Naive thymus-derived CD4-positive, alpha-beta T cell (primary cell): ENCODE measurements at regions of chr17 and their contacts with region 1.

Region 1: DNA sequence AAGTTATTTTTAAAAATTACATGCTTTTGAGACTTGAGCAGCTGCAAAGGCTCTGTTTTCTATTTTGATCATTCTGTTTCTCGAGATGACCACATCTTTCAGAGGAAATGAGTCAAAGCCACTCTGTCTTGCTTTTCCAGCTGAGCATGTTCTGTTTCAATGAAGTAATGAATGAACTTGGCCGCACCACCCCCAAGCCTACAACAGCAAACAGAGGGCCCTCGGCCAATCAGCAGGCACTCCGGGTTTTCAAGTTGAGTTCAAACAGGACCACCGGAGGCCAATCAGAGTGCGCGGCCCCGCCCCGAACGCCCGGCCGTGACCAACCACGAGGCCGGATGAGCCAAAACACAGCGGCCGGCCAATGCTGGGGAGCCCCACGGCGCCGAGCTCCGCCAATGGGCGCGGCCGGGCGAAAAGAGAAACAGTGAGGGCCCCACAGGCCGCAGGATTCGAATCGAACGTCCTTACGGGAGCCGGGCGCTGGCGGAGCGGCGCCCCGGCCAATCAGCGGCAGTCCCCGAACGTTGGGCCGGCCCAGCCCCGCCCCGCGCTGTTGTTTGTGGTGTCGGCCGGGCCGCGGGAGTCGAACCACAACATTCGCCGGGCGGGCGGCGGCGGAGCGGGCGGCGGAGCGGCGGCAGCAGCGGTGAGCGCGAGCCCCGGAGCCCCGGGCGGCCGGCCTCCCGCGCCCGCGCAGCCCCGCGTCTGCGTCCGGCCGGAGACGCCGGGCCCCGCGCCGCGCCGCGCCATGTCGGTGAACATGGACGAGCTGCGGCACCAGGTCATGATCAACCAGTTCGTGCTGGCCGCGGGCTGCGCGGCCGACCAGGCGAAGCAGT is at the start of gene UBALD2:
- DNase-seq: peak; percentile 95 to 99 (median 98)
- ATAC-seq: peak; percentile 90
- H3K4me3 ChIP-seq: peak within 1 kb of the TSS; percentile 71
- H3K4me3 Mint-ChIP-seq: peak within 1 kb of the TSS; percentile 87 to 95 (median 92)
- H3K27ac ChIP-seq: peak within 1 kb of the TSS; percentile 92
- H3K27ac Mint-ChIP-seq: peak within 1 kb of the TSS; percentile 81 to 98 (median 94)
- H3K4me1 ChIP-seq: peaks cover 46 to 58% of the 10 kb centered on the region in 2 donors
- H3K4me1 Mint-ChIP-seq: peaks cover 47 to 70% (median 61%) of the 10 kb centered on the region in 7 donors
- H3K27me3 ChIP-seq: no peaks in the 10 kb centered on the region
- H3K27me3 Mint-ChIP-seq: peaks cover 0 to 3% (median 0%) of the 10 kb centered on the region in 5 donors
- total RNA-seq, gene UBALD2: 103 to 263 (median 241) TPM

Region 2: GRCh38 chr17:76121932-76122430 is 143.0 kb before region 1 on chr17:
- CTCF ChIA-PET with region 1: interaction called, 17 read pairs
- POLR2A ChIA-PET with region 1: interaction called, 12 read pairs
- intact Hi-C with region 1: no loop called
- DNase-seq: no peak
- ATAC-seq: peak; percentile 33
- H3K4me3 ChIP-seq: peak overlapping the region; percentile 63
- H3K4me3 Mint-ChIP-seq: peak overlapping the region in 7 of 10 donors; percentile 25 to 77 (median 53)
- H3K27ac ChIP-seq: peak overlapping the region; percentile 52
- H3K27ac Mint-ChIP-seq: peak overlapping the region; percentile 40 to 91 (median 73)
- H3K4me1 ChIP-seq: peaks cover 0 to 25% of the 10 kb centered on the region in 2 donors
- H3K4me1 Mint-ChIP-seq: peaks cover 10 to 39% (median 27%) of the 10 kb centered on the region in 7 donors
- H3K27me3 ChIP-seq: no peaks in the 10 kb centered on the region
- H3K27me3 Mint-ChIP-seq: no peaks in the 10 kb centered on the region

Region 3: DNA sequence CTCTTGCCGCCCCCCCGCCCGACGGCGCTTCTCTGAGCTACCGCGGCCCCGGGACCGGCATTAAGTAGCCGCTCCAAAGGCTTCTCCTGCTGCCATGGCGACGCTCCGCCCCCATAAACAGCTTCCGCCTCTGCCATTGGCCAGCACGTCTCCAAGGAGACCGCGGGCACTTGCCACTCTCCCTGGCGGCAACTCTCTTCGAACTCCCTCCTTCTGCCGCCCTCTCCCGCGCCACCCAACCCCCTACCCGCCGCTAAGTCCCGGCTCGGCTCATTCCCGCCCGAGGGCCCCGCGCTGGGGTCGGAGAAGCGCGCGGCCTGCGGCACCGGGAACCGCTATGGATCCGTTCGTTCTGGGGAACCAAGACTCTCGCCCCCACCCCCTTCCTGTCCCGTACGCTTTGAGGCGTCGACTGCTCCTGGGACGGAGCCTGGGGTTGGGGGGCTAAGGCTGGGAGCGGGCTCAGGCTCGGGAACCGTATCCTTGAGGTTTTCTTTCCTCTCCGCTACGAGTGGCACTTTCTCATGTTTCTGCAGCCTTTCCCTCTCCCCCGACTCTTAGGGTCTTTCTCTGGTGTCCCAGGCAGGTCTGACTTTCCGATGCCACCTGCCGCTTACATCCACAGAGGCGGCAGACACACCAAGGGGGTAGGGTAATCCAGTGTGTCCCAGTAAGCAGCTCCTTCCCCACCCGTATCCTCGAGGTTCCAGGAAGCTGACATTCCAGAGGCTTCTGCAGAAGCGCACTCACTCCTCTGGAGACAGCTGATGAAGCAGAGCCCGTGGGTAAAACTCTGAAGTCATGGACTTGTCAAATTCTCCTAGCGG is 123.6 kb before region 1 on chr17 and contains the start of gene FOXJ1:
- CTCF ChIA-PET with region 1: interaction called, 3 read pairs
- POLR2A ChIA-PET with region 1: interaction called, 23 read pairs
- intact Hi-C with region 1: loop called in 1 of 2 experiments (anchors 1 kb)
- DNase-seq: peak; percentile 88 to 94 (median 91)
- ATAC-seq: peak; percentile 87
- H3K4me3 ChIP-seq: peak within 1 kb of the TSS; percentile 49
- H3K4me3 Mint-ChIP-seq: peak within 1 kb of the TSS; percentile 82 to 89 (median 85)
- H3K27ac ChIP-seq: peak within 1 kb of the TSS; percentile 61
- H3K27ac Mint-ChIP-seq: peak within 1 kb of the TSS; percentile 80 to 99 (median 93)
- H3K4me1 ChIP-seq: peaks cover 50 to 58% of the 10 kb centered on the region in 2 donors
- H3K4me1 Mint-ChIP-seq: peaks cover 42 to 63% (median 59%) of the 10 kb centered on the region in 7 donors
- H3K27me3 ChIP-seq: no peaks in the 10 kb centered on the region
- H3K27me3 Mint-ChIP-seq: peaks cover 0 to 26% (median 0%) of the 10 kb centered on the region in 5 donors
- total RNA-seq, gene FOXJ1: 0.29 to 2.2 (median 1.4) TPM

Region 4: DNA sequence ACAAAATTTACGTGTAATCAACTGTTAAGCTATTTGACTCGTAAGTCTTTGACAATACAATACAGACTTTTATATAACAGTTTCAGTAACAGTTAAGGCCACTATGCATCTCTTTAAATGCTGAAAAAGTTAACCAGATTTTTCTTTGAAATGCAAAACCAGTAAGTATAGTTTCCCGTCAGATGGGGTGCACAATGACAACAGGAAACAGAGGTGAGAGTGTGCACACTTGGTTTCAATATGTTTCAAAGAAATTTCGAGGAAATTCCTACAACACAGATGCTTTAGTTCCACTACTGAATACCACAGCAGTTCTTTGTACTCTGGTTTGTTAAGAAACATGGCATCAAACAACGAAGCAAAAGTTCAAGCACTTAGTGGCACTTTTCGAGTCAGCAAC is 73.1 kb before region 1 on chr17:
- CTCF ChIA-PET with region 1: interaction called, 5 read pairs
- POLR2A ChIA-PET with region 1: interaction called, 214 read pairs
- intact Hi-C with region 1: loop called (anchors 1 kb)
- DNase-seq: peak in 7 of 9 donors; percentile 72 to 94 (median 89)
- ATAC-seq: peak; percentile 96
- H3K4me3 ChIP-seq: peak overlapping the region; percentile 42
- H3K4me3 Mint-ChIP-seq: peak overlapping the region; percentile 55 to 87 (median 73)
- H3K27ac ChIP-seq: peak overlapping the region; percentile 79
- H3K27ac Mint-ChIP-seq: peak overlapping the region; percentile 90 to 99 (median 96)
- H3K4me1 ChIP-seq: peaks cover 61 to 84% of the 10 kb centered on the region in 2 donors
- H3K4me1 Mint-ChIP-seq: peaks cover 46 to 87% (median 79%) of the 10 kb centered on the region in 7 donors
- H3K27me3 ChIP-seq: no peaks in the 10 kb centered on the region
- H3K27me3 Mint-ChIP-seq: no peaks in the 10 kb centered on the region

Region 5: GRCh38 chr17:76208120-76208519 is 56.9 kb before region 1 on chr17:
- CTCF ChIA-PET with region 1: no interaction called
- POLR2A ChIA-PET with region 1: interaction called, 10 read pairs
- intact Hi-C with region 1: no loop called
- DNase-seq: no peak
- ATAC-seq: no peak
- H3K4me3 ChIP-seq: no peak overlapping the region
- H3K4me3 Mint-ChIP-seq: peak overlapping the region in 6 of 10 donors; percentile 2 to 48 (median 16)
- H3K27ac ChIP-seq: peak overlapping the region; percentile 32
- H3K27ac Mint-ChIP-seq: peak overlapping the region in 7 of 9 donors; percentile 3 to 76 (median 70)
- H3K4me1 ChIP-seq: peaks cover 23 to 27% of the 10 kb centered on the region in 2 donors
- H3K4me1 Mint-ChIP-seq: peaks cover 19 to 70% (median 61%) of the 10 kb centered on the region in 7 donors
- H3K27me3 ChIP-seq: no peaks in the 10 kb centered on the region
- H3K27me3 Mint-ChIP-seq: no peaks in the 10 kb centered on the region

Region 6: DNA sequence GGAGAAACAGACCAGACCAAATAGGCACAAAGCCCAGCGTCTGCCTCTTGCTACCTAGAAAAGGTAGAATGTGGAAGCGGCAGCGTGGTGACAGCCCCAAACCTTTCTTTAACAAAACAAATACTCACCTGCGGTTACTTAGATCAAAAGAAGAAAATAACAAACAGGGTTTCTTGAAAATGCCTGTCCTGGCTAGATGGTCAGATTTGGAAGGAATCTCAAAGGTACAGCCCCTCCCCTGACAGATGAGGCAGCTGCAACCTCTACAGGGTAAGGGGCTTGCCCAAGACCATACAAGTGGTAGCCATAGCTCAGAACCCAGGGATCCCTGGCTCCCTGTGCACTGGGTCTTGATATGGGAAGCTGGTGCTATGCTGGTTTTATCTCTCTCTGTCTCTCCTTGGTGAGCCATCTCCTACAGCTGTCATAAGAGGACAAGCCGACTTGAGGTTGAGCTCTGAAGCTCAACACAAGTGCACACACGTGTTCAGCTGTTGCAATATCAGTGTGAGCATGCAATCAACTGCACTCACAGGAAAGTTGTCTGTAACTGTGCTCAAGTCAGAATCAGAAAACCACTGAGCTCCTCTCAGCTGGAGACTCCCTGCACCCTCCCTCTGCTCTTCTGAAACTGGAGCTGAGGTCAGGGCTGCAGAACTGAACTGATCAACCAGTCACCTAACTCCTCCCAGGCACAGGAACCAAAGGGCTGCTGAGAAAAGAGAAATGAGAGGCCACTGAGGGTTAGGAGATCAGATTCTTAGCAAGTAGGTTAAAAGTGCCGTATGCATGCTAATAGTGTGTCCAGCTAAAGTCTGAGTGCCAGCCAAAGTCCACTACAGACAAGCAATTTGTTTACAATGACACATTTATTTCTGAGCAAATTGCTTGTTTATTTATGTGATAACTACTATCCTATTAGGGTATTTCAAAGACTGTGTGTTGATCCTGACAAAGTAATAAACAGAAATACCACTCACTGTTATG is 18.6 kb before region 1 on chr17:
- CTCF ChIA-PET with region 1: interaction called, 14 read pairs
- POLR2A ChIA-PET with region 1: interaction called, 375 read pairs
- intact Hi-C with region 1: loop called (anchors 1 kb)
- DNase-seq: peak in 7 of 9 donors; percentile 43 to 75 (median 52)
- ATAC-seq: peak; percentile 92
- H3K4me3 ChIP-seq: peak overlapping the region; percentile 8
- H3K4me3 Mint-ChIP-seq: peak overlapping the region; percentile 60 to 84 (median 75)
- H3K27ac ChIP-seq: peak overlapping the region; percentile 61
- H3K27ac Mint-ChIP-seq: peak overlapping the region; percentile 84 to 96 (median 92)
- H3K4me1 ChIP-seq: peaks cover 17 to 56% of the 10 kb centered on the region in 2 donors
- H3K4me1 Mint-ChIP-seq: peaks cover 34 to 84% (median 68%) of the 10 kb centered on the region in 7 donors
- H3K27me3 ChIP-seq: no peaks in the 10 kb centered on the region
- H3K27me3 Mint-ChIP-seq: no peaks in the 10 kb centered on the region

Region 7: GRCh38 chr17:76278952-76279741 is 14.2 kb after region 1 on chr17:
- CTCF ChIA-PET with region 1: interaction called, 20 read pairs
- POLR2A ChIA-PET with region 1: interaction called, 310 read pairs
- intact Hi-C with region 1: loop called in 1 of 2 experiments (anchors 1 kb)
- DNase-seq: peak; percentile 69 to 89 (median 81)
- ATAC-seq: peak; percentile 87
- H3K4me3 ChIP-seq: no peak overlapping the region
- H3K4me3 Mint-ChIP-seq: no peak overlapping the region
- H3K27ac ChIP-seq: no peak overlapping the region
- H3K27ac Mint-ChIP-seq: peak overlapping the region in 7 of 9 donors; percentile 22 to 74 (median 46)
- H3K4me1 ChIP-seq: peaks cover 5 to 17% of the 10 kb centered on the region in 2 donors
- H3K4me1 Mint-ChIP-seq: peaks cover 7 to 29% (median 27%) of the 10 kb centered on the region in 7 donors
- H3K27me3 ChIP-seq: no peaks in the 10 kb centered on the region
- H3K27me3 Mint-ChIP-seq: no peaks in the 10 kb centered on the region

Region 8: GRCh38 chr17:76292567-76292966 is 27.6 kb after region 1 on chr17:
- CTCF ChIA-PET with region 1: no interaction called
- POLR2A ChIA-PET with region 1: no interaction called
- intact Hi-C with region 1: no loop called
- DNase-seq: no peak
- ATAC-seq: no peak
- H3K4me3 ChIP-seq: no peak overlapping the region
- H3K4me3 Mint-ChIP-seq: no peak overlapping the region
- H3K27ac ChIP-seq: no peak overlapping the region
- H3K27ac Mint-ChIP-seq: no peak overlapping the region
- H3K4me1 ChIP-seq: no peaks in the 10 kb centered on the region
- H3K4me1 Mint-ChIP-seq: peaks cover 0 to 1% (median 0%) of the 10 kb centered on the region in 7 donors
- H3K27me3 ChIP-seq: no peaks in the 10 kb centered on the region
- H3K27me3 Mint-ChIP-seq: no peaks in the 10 kb centered on the region

Region 9: GRCh38 chr17:76501018-76501826 is 236.2 kb after region 1 on chr17 and contains the start of gene RHBDF2:
- CTCF ChIA-PET with region 1: no interaction called
- POLR2A ChIA-PET with region 1: no interaction called
- intact Hi-C with region 1: no loop called
- DNase-seq: peak; percentile 90 to 100 (median 95)
- ATAC-seq: peak; percentile 99
- H3K4me3 ChIP-seq: peak within 1 kb of the TSS; percentile 62
- H3K4me3 Mint-ChIP-seq: peak within 1 kb of the TSS; percentile 82 to 91 (median 86)
- H3K27ac ChIP-seq: peak within 1 kb of the TSS; percentile 73
- H3K27ac Mint-ChIP-seq: peak within 1 kb of the TSS; percentile 95 to 99 (median 97)
- H3K4me1 ChIP-seq: peaks cover 22 to 44% of the 10 kb centered on the region in 2 donors
- H3K4me1 Mint-ChIP-seq: peaks cover 17 to 61% (median 35%) of the 10 kb centered on the region in 7 donors
- H3K27me3 ChIP-seq: no peaks in the 10 kb centered on the region
- H3K27me3 Mint-ChIP-seq: no peaks in the 10 kb centered on the region
- total RNA-seq, gene RHBDF2: 31.1 to 119 (median 35.4) TPM